Body of pancreas (tissue), 4 donors: ENCODE measurements at regions of chr3 and their contacts with region 1.

Region 1: GRCh38 chr3:63232739-63233365 is 45.3 kb upstream of the SYNPR start:
- DNase-seq: no peak
- ATAC-seq: no peak
- H3K4me3 ChIP-seq: no peak overlapping the region
- H3K27ac ChIP-seq: no peak overlapping the region
- H3K4me1 ChIP-seq: no peaks in the 10 kb centered on the region
- H3K27me3 ChIP-seq: no peaks in the 10 kb centered on the region
- CTCF ChIP-seq: peak in 6 of 7 experiments; percentile 24 to 32 (median 28)
- POLR2A ChIP-seq: no peak

Region 2: DNA sequence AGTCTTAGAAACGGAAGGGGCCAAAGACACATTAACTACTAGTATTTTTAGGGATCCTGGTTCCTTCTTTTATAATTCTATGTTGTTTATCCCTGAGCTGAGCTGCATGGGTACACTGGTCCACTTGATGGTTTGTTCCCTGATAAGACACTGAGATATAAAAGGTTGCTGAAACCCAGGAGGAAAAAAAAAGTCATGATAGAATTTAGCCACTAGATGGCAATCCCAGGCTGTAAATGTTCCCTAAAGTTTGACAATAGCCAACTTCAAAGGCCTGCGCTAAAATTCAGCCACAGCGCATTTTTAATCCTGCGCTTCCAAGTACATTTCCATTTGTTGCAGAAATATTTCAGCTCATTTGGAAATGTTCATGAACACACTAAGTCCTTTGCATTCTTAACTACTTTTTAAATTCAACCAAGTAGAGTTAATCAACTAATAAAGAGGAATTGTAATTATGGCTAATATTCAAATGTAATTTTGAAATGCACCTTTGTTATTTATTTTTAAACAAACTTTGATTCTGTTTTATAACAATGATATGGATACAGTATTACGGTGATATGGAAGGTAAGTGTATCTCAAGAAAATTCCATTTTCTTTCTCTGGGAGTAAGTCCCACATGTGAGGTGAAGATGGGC is 610.2 kb before region 1 on chr3:
- intact Hi-C with region 1: loop called (anchors 5 kb)
- DNase-seq: peak in 2 of 4 donors; percentile 6 to 18
- ATAC-seq: peak; percentile 52
- H3K4me3 ChIP-seq: no peak overlapping the region
- H3K27ac ChIP-seq: no peak overlapping the region
- H3K4me1 ChIP-seq: no peaks in the 10 kb centered on the region
- H3K27me3 ChIP-seq: no peaks in the 10 kb centered on the region
- CTCF ChIP-seq: peak in 6 of 7 experiments; percentile 52 to 79 (median 70)
- POLR2A ChIP-seq: no peak

Region 3: DNA sequence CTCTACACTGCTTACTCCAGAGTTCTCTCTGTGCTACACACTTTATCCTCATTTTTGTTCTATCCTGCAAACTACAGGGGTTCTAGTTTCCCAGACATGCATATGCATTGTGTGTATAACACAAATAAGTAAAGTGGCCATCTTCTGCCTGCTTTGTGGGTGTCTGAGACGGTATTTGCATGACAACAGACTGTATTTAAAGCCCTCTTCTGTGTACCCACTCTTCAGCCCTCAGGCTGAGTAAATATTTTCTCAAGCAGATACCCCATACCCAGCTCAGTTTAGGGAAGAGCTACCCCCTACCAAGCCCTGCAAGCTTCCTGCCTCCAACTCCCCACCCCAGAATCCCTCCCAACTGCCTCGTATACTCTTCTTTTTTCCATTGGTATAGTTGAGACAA is 76.9 kb after region 1 on chr3:
- intact Hi-C with region 1: no loop called
- DNase-seq: no peak
- ATAC-seq: no peak
- H3K4me3 ChIP-seq: no peak overlapping the region
- H3K27ac ChIP-seq: no peak overlapping the region
- H3K4me1 ChIP-seq: no peaks in the 10 kb centered on the region
- H3K27me3 ChIP-seq: no peaks in the 10 kb centered on the region
- CTCF ChIP-seq: no peak
- POLR2A ChIP-seq: no peak